ENCODE measurements at regions of chr15 and their contacts with region 1.

Region 1: GRCh38 chr15:80856809-80857377 is 77.7 kb downstream of the CEMIP start:
- DNase-seq: no peak
- H3K4me3 ChIP-seq: no peak overlapping the region
- H3K27ac ChIP-seq: no peak overlapping the region
- H3K4me1 ChIP-seq: peaks cover 0 to 6% (median 1%) of the 10 kb centered on the region in 4 experiments; a peak in 2 of 7 replicates
- H3K27me3 ChIP-seq: no peaks in the 10 kb centered on the region; a peak in 1 of 7 replicates
- CTCF ChIP-seq: no peak
- EP300 ChIP-seq: no peak
- POLR2A ChIP-seq: no peak
- RAD21 ChIP-seq: no peak

Region 2: GRCh38 chr15:80783260-80783659 is 73.6 kb before region 1 on chr15:
- CTCF ChIA-PET with region 1: interaction called, 28 read pairs
- POLR2A ChIA-PET with region 1: no interaction called
- DNase-seq: no peak
- H3K4me3 ChIP-seq: no peak overlapping the region
- H3K27ac ChIP-seq: no peak overlapping the region
- H3K4me1 ChIP-seq: peaks cover 0 to 7% (median 4%) of the 10 kb centered on the region in 4 experiments; a peak in 5 of 7 replicates
- H3K27me3 ChIP-seq: peaks cover 4 to 32% (median 23%) of the 10 kb centered on the region in 4 experiments
- CTCF ChIP-seq: no peak
- EP300 ChIP-seq: no peak
- POLR2A ChIP-seq: no peak
- RAD21 ChIP-seq: no peak

Region 3: DNA sequence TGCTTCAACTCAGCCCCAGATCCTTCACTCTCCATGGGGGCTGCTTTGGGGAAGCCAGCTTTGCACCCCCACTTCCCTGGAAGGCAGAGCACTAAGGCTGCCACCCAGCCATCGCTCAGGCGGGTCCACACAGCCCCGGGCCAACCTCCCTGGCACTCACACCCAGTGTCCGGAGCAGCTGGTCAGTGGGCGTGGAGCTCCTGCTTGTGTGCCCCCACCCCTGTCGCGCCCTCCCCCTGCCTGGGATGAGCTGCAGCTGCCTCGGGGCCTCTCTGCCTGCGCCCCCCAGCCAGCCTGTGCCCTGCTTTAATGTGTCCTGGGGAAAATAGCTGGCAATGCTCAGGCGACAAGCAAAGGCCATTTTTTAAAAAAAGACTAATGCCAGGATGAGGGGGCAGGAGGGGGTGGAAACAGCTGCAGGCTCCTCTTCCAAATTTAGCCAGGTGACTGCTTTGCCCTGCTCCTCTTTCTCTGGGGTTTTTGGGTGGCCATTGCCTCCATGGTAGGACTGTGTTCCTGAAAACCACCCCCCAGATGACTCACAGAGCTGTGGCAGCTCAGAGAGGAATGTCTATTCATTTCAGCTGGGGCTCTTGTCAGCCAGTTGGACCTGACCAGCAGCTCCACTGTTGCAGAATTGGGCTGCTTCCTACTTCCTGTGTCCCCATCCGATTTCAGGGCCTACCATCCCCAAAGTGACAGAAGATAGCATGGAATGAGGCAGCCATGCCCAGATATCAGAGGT is 12.7 kb before region 1 on chr15:
- CTCF ChIA-PET with region 1: interaction called, 35 read pairs
- POLR2A ChIA-PET with region 1: no interaction called
- DNase-seq: no peak
- H3K4me3 ChIP-seq: no peak overlapping the region
- H3K27ac ChIP-seq: no peak overlapping the region
- H3K4me1 ChIP-seq: peaks cover 0 to 2% (median 0%) of the 10 kb centered on the region in 4 experiments; a peak in 3 of 7 replicates
- H3K27me3 ChIP-seq: no peaks in the 10 kb centered on the region
- CTCF ChIP-seq: no peak
- EP300 ChIP-seq: no peak
- POLR2A ChIP-seq: no peak
- RAD21 ChIP-seq: no peak

Region 4: DNA sequence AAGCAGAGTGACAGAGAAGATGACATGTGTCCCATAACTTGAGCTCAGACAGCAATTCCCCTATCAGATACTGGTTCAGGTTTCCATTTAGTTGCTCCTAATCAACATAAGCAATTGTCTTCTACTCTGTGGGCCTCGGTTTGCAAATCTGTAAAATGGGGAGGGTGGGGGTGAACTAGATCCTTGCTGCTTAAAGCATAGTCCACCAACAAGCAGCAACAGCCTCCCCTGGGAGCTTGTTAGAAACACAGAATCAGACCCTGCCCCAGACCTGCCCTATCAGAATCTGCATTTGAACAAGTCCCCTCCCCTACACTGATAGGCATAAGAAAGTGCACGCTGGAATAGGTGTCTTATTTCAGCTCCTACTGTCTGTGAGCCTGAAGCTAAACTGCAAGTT is 10.0 kb after region 1 on chr15:
- CTCF ChIA-PET with region 1: interaction called, 12 read pairs
- POLR2A ChIA-PET with region 1: interaction called, 3 read pairs
- DNase-seq: peak in 1 of 2 experiments; percentile 36
- H3K4me3 ChIP-seq: peak overlapping the region in 1 of 4 experiments; percentile 23; a peak in 2 of 8 replicates
- H3K27ac ChIP-seq: no peak overlapping the region
- H3K4me1 ChIP-seq: peaks cover 6 to 21% (median 17%) of the 10 kb centered on the region in 4 experiments
- H3K27me3 ChIP-seq: no peaks in the 10 kb centered on the region; a peak in 1 of 7 replicates
- CTCF ChIP-seq: no peak
- EP300 ChIP-seq: no peak
- POLR2A ChIP-seq: no peak
- RAD21 ChIP-seq: no peak

Measured in H1 (cell line).